ENCODE measurements at regions of chr17 and their contacts with region 1.

Region 1: DNA sequence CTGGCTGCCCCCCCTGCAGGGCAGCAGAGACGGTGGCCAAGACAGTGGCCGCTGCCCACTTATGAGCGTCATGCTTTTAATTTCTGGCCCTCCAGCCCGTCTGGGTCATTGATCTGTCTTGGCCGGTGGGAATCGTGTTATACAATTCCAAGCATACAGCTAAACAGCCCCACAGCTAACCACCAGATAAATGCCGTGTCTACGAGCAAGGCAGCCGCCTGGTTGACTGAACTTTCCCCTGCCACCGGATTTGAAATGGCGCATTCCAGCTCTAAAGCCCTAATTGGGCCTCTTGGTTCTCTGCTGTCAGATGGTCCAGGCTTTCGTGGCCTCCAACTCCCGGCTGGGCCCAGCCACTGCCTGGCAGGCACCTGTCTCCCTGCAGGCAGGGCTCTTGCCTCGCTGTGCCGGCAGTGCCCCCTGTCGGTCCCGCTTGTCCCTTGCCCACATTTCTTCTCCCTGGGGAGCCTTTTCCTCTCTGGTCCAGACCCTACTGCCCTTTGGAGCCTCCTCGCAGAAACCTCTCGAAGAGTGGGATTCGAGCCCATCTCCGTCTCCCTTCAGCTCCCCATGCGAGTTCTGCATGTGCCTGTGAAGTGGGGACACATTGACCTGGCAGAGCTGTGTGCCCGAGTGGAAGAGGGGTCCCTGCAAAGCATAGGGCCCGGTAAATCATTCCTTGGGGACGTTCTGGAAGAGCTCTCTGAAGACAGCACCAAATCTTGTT is 1.8 kb upstream of the RBFOX3 start:
- DNase-seq: peak; percentile 46 to 96 (median 82)

Region 2: DNA sequence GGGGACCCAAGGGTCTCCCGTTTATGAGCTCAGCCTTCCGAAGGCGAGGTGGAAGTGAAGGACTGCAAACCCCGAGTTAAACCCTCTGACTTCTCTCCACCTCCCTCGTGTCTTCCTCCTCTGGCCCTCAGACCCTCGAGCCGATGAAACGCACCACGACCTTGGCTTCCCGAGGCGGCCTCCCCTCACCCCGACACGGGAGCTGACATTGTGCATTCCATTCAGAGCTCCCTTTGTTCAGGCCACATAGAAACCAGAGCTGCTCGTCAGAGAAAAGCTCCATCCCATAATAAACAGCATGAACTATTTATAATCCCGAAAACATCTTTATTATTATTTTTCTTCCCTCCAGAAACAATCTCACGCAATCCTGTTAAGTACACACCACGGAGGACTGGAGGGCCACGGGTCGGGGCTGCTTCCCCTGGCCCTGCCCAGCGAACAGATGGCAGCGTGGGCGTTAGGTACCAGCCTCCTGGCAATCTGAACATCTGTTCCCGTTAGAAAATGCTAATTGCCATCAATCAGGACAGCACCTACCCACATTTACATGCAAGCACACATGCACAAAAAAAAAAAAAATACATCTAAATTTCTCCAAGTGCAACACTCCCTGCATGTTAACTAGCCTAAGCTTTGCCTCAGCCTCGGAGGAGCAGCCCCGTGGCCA is 147.5 kb before region 1 on chr17:
- intact Hi-C with region 1: loop called (anchors 5 kb)
- DNase-seq: peak in 6 of 10 donors; percentile 45 to 91 (median 54)

Region 3: DNA sequence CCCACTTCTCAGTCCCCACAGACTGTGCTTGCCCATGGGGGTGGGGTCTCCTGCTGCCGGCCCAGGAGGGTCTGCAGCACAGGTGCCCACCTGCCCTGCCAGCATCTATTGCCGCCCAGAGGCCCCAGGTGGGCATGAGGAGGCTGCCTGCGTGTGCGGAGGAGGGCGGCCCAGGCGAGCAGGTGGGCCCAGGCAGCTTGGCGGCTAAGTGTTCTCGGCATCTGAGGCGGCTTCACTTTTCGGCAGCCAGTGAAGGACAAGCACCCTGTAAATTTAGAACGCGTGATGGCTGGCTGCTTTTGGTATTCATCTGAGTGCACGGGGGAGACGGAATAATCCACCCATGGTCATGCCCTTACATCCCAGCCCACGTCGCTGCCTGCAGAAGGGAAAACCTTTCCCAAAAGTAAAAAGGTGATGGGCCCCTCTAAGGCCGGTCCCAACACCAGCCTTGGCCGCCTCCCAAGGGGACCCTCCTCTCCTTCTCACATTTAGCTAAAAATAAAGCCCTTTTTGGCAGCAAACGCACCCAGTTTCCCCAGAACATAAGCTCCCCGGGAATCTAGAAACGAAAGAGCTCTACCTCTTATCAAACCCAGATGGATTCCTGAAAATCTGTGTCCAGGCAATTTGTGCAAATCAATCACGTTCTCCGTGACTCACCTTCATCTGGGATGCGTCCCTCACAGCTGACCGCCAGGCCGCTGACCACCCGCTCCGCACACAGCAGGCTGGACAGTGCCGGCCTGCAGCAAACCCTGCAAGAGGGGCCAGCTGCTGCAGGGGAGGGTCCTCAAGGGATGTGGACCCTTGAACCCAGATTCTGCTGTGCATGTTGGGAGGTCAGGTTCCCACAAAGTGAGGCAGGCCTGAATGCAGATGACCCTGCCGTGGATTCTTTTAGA is 81.2 kb before region 1 on chr17:
- intact Hi-C with region 1: loop called (anchors 10 kb)
- DNase-seq: peak in 6 of 10 donors; percentile 55 to 92 (median 73)

Region 4: DNA sequence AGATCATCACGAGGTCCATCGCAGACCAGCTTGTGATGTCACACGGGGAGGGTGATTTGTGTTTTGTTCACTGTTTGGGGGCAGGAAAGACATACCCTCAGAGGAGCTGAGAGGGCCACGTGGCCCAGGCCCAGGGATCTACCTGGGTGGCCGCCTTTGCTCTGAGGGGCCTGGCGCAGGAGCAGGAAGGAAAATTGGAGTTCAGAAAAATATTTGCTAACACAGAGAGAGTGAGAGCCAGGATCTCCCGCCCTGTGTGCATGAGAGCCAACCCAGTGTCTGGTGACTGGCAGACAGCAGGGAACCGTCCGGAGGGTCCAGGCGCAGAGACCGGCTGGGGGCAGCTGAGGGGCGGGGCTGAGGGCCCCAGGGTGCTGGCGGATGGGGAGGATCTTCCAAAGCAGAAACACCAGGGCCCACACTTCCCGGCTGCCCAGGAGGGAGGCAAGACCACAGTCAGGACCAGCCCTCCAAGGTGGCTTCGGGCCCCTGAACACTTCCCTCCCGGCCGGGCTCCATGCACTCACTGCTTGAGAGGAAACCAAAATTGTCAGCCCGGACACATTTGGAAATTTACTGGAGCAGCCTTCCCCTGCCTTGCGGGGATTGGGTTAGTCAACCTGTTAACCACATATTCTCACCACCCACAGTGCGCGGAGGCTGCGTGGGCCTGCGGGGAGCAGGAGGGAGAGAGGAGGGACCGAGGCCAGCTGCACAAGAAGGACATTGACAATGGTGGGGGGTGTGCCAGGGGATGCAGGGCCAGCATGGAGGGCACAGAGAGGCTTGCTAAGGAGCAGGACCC is 54.3 kb before region 1 on chr17:
- intact Hi-C with region 1: loop called (anchors 10 kb)
- DNase-seq: peak in 5 of 10 donors; percentile 53 to 95 (median 87)

Measured in posterior cingulate gyrus (tissue), 11 donors.